ENCODE measurements at regions of chr3 and their contacts with region 1.

Region 1: GRCh38 chr3:185764163-185764979 is 60.5 kb downstream of the IGF2BP2 start:
- DNase-seq: peak; percentile 61
- H3K4me3 ChIP-seq: no peak overlapping the region
- H3K27ac ChIP-seq: peak overlapping the region; percentile 0
- H3K4me1 ChIP-seq: peaks cover 58% of the 10 kb centered on the region
- H3K27me3 ChIP-seq: no peaks in the 10 kb centered on the region
- CTCF ChIP-seq: no peak

Region 2: GRCh38 chr3:185659942-185660921 is 104.1 kb before region 1 on chr3:
- CTCF ChIA-PET with region 1: no interaction called
- dilution Hi-C with region 1: no loop called
- in situ Hi-C with region 1: no loop called
- intact Hi-C with region 1: loop called (anchors 1 kb)
- DNase-seq: peak; percentile 62
- H3K4me3 ChIP-seq: no peak overlapping the region
- H3K27ac ChIP-seq: peak overlapping the region; percentile 48
- H3K4me1 ChIP-seq: peaks cover 60% of the 10 kb centered on the region
- H3K27me3 ChIP-seq: no peaks in the 10 kb centered on the region
- CTCF ChIP-seq: peak; percentile 98 to 99

Region 3: DNA sequence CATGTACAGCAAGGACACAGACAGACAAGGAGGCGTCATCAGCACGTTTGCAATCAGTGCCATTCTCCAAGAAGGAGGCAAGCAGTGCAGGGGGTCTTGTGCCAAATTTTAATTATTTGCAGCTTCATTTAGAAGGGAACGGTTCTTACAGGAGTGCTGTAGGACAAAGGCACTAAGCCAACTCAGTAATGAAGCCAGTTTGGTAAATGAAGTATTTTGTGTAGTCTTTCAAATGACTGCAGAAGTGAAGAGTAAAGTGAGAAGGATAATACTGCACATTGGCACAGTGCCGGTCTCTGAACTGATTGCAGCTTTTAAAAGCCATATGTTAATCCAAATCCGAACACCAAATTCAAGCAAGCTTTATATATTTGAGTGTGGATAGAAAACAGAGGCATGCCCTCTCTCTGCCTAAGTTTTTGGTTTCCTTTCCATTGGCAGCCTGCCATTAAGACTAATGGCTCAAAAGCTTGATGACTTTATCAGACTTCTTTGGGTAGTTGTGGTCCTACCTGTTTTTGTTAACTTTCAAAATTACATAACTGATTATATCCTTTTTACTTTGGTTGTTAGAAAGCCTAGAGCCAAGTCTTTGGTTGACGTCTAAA is 77.0 kb before region 1 on chr3:
- CTCF ChIA-PET with region 1: no interaction called
- dilution Hi-C with region 1: loop called (anchors 5 kb)
- in situ Hi-C with region 1: no loop called
- intact Hi-C with region 1: no loop called
- DNase-seq: peak; percentile 48
- H3K4me3 ChIP-seq: no peak overlapping the region
- H3K27ac ChIP-seq: peak overlapping the region; percentile 90
- H3K4me1 ChIP-seq: peaks cover 23% of the 10 kb centered on the region
- H3K27me3 ChIP-seq: no peaks in the 10 kb centered on the region
- CTCF ChIP-seq: no peak

Region 4: GRCh38 chr3:185744997-185745843 is 19.2 kb before region 1 on chr3:
- CTCF ChIA-PET with region 1: interaction called, 5 read pairs
- dilution Hi-C with region 1: no loop called
- in situ Hi-C with region 1: no loop called
- intact Hi-C with region 1: loop called (anchors 2 kb)
- DNase-seq: peak; percentile 96
- H3K4me3 ChIP-seq: no peak overlapping the region
- H3K27ac ChIP-seq: peak overlapping the region; percentile 91
- H3K4me1 ChIP-seq: peaks cover 38% of the 10 kb centered on the region
- H3K27me3 ChIP-seq: no peaks in the 10 kb centered on the region
- CTCF ChIP-seq: peak in 1 of 2 donors; percentile 1